Mammary epithelial cell (primary cell): ENCODE measurements at regions of chr5 and their contacts with region 1.

Region 1: DNA sequence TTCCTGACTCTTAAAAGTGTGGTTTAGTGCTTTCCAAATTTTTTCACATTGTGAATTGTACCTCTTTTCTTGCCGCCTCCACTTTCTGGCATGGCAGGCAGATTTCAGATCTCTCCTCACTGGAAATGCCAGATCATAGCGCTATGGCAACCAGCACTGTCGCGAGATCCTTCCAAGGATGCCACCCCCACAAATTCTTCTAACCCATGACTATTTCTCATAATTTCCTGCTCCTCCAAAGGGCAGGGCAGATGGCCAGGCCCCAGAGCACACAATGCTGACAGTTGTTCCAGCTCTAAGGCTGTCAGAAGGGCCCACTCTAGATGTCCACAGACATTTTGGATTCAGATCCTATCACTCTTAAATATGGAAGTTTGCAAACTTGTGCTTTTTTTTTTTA is 446.2 kb upstream of the RIOK2 start:
- DNase-seq: peak; percentile 69
- H3K4me3 ChIP-seq: no peak overlapping the region
- H3K27ac ChIP-seq: no peak overlapping the region
- H3K4me1 ChIP-seq: peaks cover 6% of the 10 kb centered on the region
- H3K27me3 ChIP-seq: no peaks in the 10 kb centered on the region
- CTCF ChIP-seq: no peak

Region 2: DNA sequence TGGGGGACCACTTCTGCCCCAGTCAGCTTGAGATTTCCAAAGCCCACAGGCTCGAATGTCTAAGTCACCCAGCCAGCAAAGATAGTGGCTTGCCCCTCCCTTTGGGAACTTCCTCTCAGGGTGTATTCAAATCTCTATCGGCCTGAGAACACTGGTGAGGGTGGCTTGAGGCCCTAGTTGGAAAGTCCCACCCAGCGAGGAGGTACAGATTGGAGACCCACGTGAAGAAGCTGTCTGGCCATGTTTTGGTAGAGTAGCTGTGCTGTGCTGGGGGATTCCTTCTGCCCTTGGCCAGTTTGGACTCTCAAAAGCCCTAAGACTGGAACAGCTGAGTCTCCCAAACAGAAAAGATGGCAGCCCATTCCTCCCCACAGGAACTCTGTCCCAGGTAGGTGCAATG is 273.5 kb before region 1 on chr5:
- CTCF ChIA-PET with region 1: no interaction called
- dilution Hi-C with region 1: no loop called
- in situ Hi-C with region 1: no loop called
- intact Hi-C with region 1: no loop called
- DNase-seq: no peak
- H3K4me3 ChIP-seq: no peak overlapping the region
- H3K27ac ChIP-seq: no peak overlapping the region
- H3K4me1 ChIP-seq: no peaks in the 10 kb centered on the region
- H3K27me3 ChIP-seq: no peaks in the 10 kb centered on the region
- CTCF ChIP-seq: no peak

Region 3: DNA sequence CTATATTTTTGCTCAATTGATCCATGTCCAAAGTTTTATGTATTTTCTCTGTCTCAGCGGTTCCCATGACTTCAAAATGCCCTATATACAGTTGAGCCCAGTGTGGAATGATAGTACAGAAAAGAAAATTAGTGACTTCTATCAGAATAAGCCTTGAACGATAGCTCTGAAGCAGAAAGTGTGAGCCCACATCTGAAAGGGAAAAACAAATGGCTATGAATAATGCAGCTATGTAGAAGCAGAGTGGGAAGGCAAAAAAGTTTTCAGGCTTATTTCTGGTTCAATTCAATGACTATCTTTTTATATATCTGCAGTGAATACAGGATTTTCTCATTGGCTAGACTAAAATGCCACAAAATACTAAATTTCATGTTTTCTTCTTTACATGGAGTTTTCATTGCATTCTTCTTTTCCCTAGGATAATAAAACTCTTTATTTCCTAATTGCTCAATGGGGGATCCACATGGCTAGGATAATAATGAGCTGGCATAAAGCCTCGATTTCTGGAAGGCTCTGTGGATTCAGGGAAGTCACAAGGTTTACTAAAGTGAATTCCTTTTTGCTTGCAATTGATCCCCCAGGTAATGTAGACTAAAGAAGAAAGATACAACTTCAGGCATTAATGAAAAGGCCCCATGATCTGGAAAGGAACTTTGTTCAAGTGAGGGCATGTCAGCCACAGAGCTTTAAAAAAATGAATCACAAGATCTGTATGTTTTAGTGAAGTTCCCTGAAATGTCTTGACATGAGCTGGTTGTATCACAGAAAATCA is 69.3 kb before region 1 on chr5:
- CTCF ChIA-PET with region 1: no interaction called
- dilution Hi-C with region 1: no loop called
- in situ Hi-C with region 1: no loop called
- intact Hi-C with region 1: loop called (anchors 5 kb)
- DNase-seq: peak; percentile 80
- H3K4me3 ChIP-seq: no peak overlapping the region
- H3K27ac ChIP-seq: peak overlapping the region; percentile 81
- H3K4me1 ChIP-seq: peaks cover 21% of the 10 kb centered on the region
- H3K27me3 ChIP-seq: no peaks in the 10 kb centered on the region
- CTCF ChIP-seq: no peak

Region 4: GRCh38 chr5:97838214-97838613 is 208.9 kb after region 1 on chr5:
- CTCF ChIA-PET with region 1: no interaction called
- dilution Hi-C with region 1: no loop called
- in situ Hi-C with region 1: no loop called
- intact Hi-C with region 1: no loop called
- DNase-seq: peak; percentile 90
- H3K4me3 ChIP-seq: no peak overlapping the region
- H3K27ac ChIP-seq: no peak overlapping the region
- H3K4me1 ChIP-seq: peaks cover 30% of the 10 kb centered on the region
- H3K27me3 ChIP-seq: no peaks in the 10 kb centered on the region
- CTCF ChIP-seq: no peak